Psoas muscle (tissue), 8 donors: ENCODE measurements at regions of chr1 and their contacts with region 1.

Region 1: GRCh38 chr1:184881941-184882913 is 92.1 kb downstream of the NIBAN1 start:
- DNase-seq: no peak
- ATAC-seq: peak in 2 of 4 donors; percentile 33 to 38
- H3K4me3 ChIP-seq: no peak overlapping the region
- H3K27ac ChIP-seq: peak overlapping the region; percentile 56
- H3K4me1 ChIP-seq: peaks cover 43% of the 10 kb centered on the region
- H3K27me3 ChIP-seq: no peaks in the 10 kb centered on the region
- CTCF ChIP-seq: no peak

Region 2: DNA sequence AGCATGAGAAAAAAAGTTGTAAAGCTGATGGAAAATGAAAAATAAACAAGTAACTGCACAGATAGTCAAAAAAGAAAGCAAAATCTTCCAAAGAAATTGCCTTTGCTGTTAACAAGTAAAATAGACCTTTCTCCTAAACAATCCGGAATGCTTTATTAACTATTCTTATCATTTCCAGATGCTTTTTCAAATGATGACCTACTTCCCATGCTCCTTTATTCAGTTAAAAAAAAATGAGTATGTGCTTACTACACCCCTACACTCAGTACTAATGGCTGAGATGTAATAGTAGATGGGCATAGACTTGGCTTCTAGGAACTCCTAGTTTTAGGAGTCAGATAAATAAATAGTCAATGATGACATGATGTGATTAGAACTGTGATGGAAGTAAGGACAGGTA is 16.4 kb before region 1 on chr1:
- intact Hi-C with region 1: loop called in 1 of 2 experiments (anchors 2 kb)
- DNase-seq: no peak
- ATAC-seq: no peak
- H3K4me3 ChIP-seq: no peak overlapping the region
- H3K27ac ChIP-seq: no peak overlapping the region
- H3K4me1 ChIP-seq: peaks cover 11% of the 10 kb centered on the region
- H3K27me3 ChIP-seq: no peaks in the 10 kb centered on the region
- CTCF ChIP-seq: no peak